ENCODE measurements at regions of chr20 and their contacts with region 1.

Region 1: DNA sequence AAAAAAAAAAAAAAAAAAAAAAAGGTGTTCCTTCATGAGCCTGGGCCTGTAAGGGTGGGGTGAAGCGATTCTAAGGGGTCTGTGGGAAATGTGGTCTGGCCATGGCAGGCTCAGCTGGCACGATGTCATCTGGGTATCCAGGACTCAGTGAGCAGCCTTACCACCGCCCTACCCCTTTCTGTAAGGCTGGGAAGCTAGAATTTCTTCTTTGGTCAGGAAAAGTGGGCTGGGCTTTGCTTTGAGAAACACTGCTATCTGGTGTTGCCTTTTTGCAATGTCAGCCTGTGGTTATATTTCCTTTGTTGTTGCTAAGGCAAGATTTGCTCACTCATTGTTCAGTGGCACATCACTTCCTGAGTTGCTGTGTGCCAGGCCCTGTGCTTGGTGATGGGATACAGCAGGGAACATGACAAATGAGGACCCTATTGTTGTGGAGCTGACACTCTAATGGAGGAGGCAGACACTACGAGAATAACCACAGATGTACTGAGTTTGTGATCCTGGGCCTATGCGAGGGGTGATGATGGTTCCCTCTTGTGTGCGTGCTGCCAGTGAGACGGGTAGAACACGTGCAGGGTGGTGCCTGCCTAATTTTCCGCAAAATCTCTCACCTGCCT is 45.9 kb upstream of the ZNFX1 start:
- DNase-seq: no peak
- H3K4me3 ChIP-seq: no peak overlapping the region
- H3K27ac ChIP-seq: no peak overlapping the region
- H3K4me1 ChIP-seq: no peaks in the 10 kb centered on the region
- H3K27me3 ChIP-seq: peaks cover 8% of the 10 kb centered on the region
- CTCF ChIP-seq: no peak

Region 2: GRCh38 chr20:49245921-49246740 is 77.6 kb before region 1 on chr20:
- intact Hi-C with region 1: loop called (anchors 2 kb)
- DNase-seq: no peak
- H3K4me3 ChIP-seq: no peak overlapping the region
- H3K27ac ChIP-seq: no peak overlapping the region
- H3K4me1 ChIP-seq: no peaks in the 10 kb centered on the region
- H3K27me3 ChIP-seq: no peaks in the 10 kb centered on the region
- CTCF ChIP-seq: peak; percentile 52